Naive thymus-derived CD4-positive, alpha-beta T cell (primary cell): ENCODE measurements at regions of chr12 and their contacts with region 1.

Region 1: GRCh38 chr12:546921-547845 is 87.4 kb downstream of the B4GALNT3 start:
- DNase-seq: peak; percentile 41 to 84 (median 55)
- ATAC-seq: peak; percentile 88
- H3K4me3 ChIP-seq: no peak overlapping the region
- H3K4me3 Mint-ChIP-seq: peak overlapping the region in 5 of 10 donors; percentile 25 to 51 (median 38)
- H3K27ac ChIP-seq: no peak overlapping the region
- H3K27ac Mint-ChIP-seq: peak overlapping the region in 3 of 9 donors; percentile 54 to 74 (median 62)
- H3K4me1 ChIP-seq: peaks cover 0 to 19% of the 10 kb centered on the region in 2 donors
- H3K4me1 Mint-ChIP-seq: peaks cover 28 to 62% (median 37%) of the 10 kb centered on the region in 7 donors
- H3K27me3 ChIP-seq: peaks cover 0 to 2% of the 10 kb centered on the region in 2 donors
- H3K27me3 Mint-ChIP-seq: peaks cover 11 to 20% (median 18%) of the 10 kb centered on the region in 5 donors

Region 2: GRCh38 chr12:442235-442884 is 104.8 kb before region 1 on chr12:
- CTCF ChIA-PET with region 1: interaction called, 39 read pairs
- POLR2A ChIA-PET with region 1: no interaction called
- intact Hi-C with region 1: loop called (anchors 1 to 2 kb)
- DNase-seq: peak in 7 of 9 donors; percentile 24 to 46 (median 38)
- ATAC-seq: peak; percentile 45
- H3K4me3 ChIP-seq: no peak overlapping the region
- H3K4me3 Mint-ChIP-seq: no peak overlapping the region
- H3K27ac ChIP-seq: no peak overlapping the region
- H3K27ac Mint-ChIP-seq: no peak overlapping the region
- H3K4me1 ChIP-seq: no peaks in the 10 kb centered on the region
- H3K4me1 Mint-ChIP-seq: no peaks in the 10 kb centered on the region
- H3K27me3 ChIP-seq: no peaks in the 10 kb centered on the region
- H3K27me3 Mint-ChIP-seq: peaks cover 0 to 4% (median 0%) of the 10 kb centered on the region in 5 donors

Region 3: GRCh38 chr12:452667-453210 is 94.4 kb before region 1 on chr12:
- CTCF ChIA-PET with region 1: interaction called, 36 read pairs
- POLR2A ChIA-PET with region 1: no interaction called
- intact Hi-C with region 1: loop called (anchors 1 kb)
- DNase-seq: peak in 5 of 9 donors; percentile 35 to 84 (median 48)
- ATAC-seq: no peak
- H3K4me3 ChIP-seq: no peak overlapping the region
- H3K4me3 Mint-ChIP-seq: no peak overlapping the region
- H3K27ac ChIP-seq: no peak overlapping the region
- H3K27ac Mint-ChIP-seq: peak overlapping the region in 2 of 9 donors; percentile 55 to 62
- H3K4me1 ChIP-seq: no peaks in the 10 kb centered on the region
- H3K4me1 Mint-ChIP-seq: peaks cover 0 to 8% (median 0%) of the 10 kb centered on the region in 7 donors
- H3K27me3 ChIP-seq: no peaks in the 10 kb centered on the region
- H3K27me3 Mint-ChIP-seq: peaks cover 0 to 35% (median 0%) of the 10 kb centered on the region in 5 donors

Region 4: DNA sequence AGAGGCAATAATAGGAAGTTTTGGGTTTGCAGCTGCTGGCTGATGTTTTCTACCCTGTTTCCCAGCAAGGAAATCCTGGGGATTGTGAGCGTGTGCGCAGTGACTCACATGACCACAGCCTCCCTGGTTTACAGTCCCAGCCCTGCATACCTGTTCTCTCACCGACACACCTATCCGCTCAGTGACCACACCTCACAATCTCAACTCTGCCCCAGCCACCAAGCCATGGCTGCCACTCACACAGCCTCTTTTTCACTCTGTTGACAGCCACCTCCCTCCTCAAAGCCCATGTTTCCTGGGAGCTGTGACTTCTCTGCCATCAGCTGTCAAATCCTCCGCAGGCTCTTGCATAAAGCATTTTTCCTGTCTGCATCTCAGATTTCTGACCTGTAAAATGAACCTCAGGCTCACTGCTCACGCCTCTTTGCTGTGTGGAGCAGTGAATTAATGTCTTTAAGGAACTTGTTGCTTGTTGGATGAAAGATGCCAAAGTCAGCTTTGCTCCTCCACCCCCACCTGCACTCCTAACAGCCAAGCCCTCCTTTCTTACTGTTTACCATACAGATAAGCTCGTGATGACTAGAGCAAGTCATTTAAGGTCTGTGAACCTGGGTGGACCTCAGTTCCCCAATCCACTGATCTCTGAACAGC is 43.9 kb before region 1 on chr12:
- CTCF ChIA-PET with region 1: no interaction called
- POLR2A ChIA-PET with region 1: no interaction called
- intact Hi-C with region 1: no loop called
- DNase-seq: no peak
- ATAC-seq: no peak
- H3K4me3 ChIP-seq: no peak overlapping the region
- H3K4me3 Mint-ChIP-seq: no peak overlapping the region
- H3K27ac ChIP-seq: no peak overlapping the region
- H3K27ac Mint-ChIP-seq: peak overlapping the region in 2 of 9 donors; percentile 38 to 48
- H3K4me1 ChIP-seq: no peaks in the 10 kb centered on the region
- H3K4me1 Mint-ChIP-seq: peaks cover 4 to 11% (median 6%) of the 10 kb centered on the region in 7 donors
- H3K27me3 ChIP-seq: no peaks in the 10 kb centered on the region
- H3K27me3 Mint-ChIP-seq: peaks cover 0 to 25% (median 0%) of the 10 kb centered on the region in 5 donors

Region 5: GRCh38 chr12:517538-517937 is 29.6 kb before region 1 on chr12:
- CTCF ChIA-PET with region 1: no interaction called
- POLR2A ChIA-PET with region 1: no interaction called
- intact Hi-C with region 1: no loop called
- DNase-seq: no peak
- ATAC-seq: no peak
- H3K4me3 ChIP-seq: no peak overlapping the region
- H3K4me3 Mint-ChIP-seq: no peak overlapping the region
- H3K27ac ChIP-seq: no peak overlapping the region
- H3K27ac Mint-ChIP-seq: no peak overlapping the region
- H3K4me1 ChIP-seq: no peaks in the 10 kb centered on the region
- H3K4me1 Mint-ChIP-seq: no peaks in the 10 kb centered on the region
- H3K27me3 ChIP-seq: peaks cover 0 to 3% of the 10 kb centered on the region in 2 donors
- H3K27me3 Mint-ChIP-seq: peaks cover 0 to 24% (median 11%) of the 10 kb centered on the region in 5 donors

Region 6: DNA sequence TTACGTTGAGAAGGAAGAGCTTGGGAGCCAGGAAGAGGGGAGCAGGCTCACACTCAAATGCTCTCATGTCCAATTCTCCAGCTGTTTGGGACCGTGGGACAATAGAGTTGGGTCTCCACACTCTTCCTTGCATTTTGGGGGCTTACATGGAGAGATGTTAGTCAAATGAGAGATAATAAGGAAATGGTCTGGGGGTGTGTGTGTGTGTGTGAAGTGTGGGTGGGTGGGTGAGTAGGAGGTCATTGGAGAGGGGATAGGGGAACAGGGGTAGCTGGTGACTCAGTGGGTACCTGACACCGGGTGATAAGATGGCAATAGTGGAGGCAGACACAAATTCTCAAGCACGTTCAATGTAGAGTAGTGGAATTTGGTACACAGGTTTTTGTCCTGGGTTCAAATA is 19.5 kb before region 1 on chr12:
- CTCF ChIA-PET with region 1: no interaction called
- POLR2A ChIA-PET with region 1: no interaction called
- intact Hi-C with region 1: no loop called
- DNase-seq: no peak
- ATAC-seq: no peak
- H3K4me3 ChIP-seq: no peak overlapping the region
- H3K4me3 Mint-ChIP-seq: no peak overlapping the region
- H3K27ac ChIP-seq: no peak overlapping the region
- H3K27ac Mint-ChIP-seq: no peak overlapping the region
- H3K4me1 ChIP-seq: no peaks in the 10 kb centered on the region
- H3K4me1 Mint-ChIP-seq: peaks cover 0 to 1% (median 0%) of the 10 kb centered on the region in 7 donors
- H3K27me3 ChIP-seq: no peaks in the 10 kb centered on the region
- H3K27me3 Mint-ChIP-seq: peaks cover 0 to 5% (median 3%) of the 10 kb centered on the region in 5 donors

Region 7: GRCh38 chr12:563250-563781 is 16.1 kb after region 1 on chr12:
- CTCF ChIA-PET with region 1: interaction called, 6 read pairs
- POLR2A ChIA-PET with region 1: interaction called, 3 read pairs
- intact Hi-C with region 1: loop called in 1 of 2 experiments (anchors 2 kb)
- DNase-seq: peak in 8 of 9 donors; percentile 54 to 89 (median 85)
- ATAC-seq: peak; percentile 91
- H3K4me3 ChIP-seq: peak overlapping the region; percentile 49
- H3K4me3 Mint-ChIP-seq: peak overlapping the region; percentile 73 to 98 (median 85)
- H3K27ac ChIP-seq: peak overlapping the region; percentile 80
- H3K27ac Mint-ChIP-seq: peak overlapping the region; percentile 84 to 96 (median 94)
- H3K4me1 ChIP-seq: peaks cover 49 to 71% of the 10 kb centered on the region in 2 donors
- H3K4me1 Mint-ChIP-seq: peaks cover 60 to 98% (median 92%) of the 10 kb centered on the region in 7 donors
- H3K27me3 ChIP-seq: no peaks in the 10 kb centered on the region
- H3K27me3 Mint-ChIP-seq: no peaks in the 10 kb centered on the region

Region 8: GRCh38 chr12:685388-685787 is 138.2 kb after region 1 on chr12:
- CTCF ChIA-PET with region 1: no interaction called
- POLR2A ChIA-PET with region 1: no interaction called
- intact Hi-C with region 1: no loop called
- DNase-seq: peak; percentile 48 to 96 (median 94)
- ATAC-seq: peak; percentile 96
- H3K4me3 ChIP-seq: no peak overlapping the region
- H3K4me3 Mint-ChIP-seq: peak overlapping the region; percentile 30 to 78 (median 72)
- H3K27ac ChIP-seq: peak overlapping the region; percentile 81
- H3K27ac Mint-ChIP-seq: peak overlapping the region; percentile 90 to 99 (median 98)
- H3K4me1 ChIP-seq: peaks cover 23 to 31% of the 10 kb centered on the region in 2 donors
- H3K4me1 Mint-ChIP-seq: peaks cover 23 to 53% (median 48%) of the 10 kb centered on the region in 7 donors
- H3K27me3 ChIP-seq: no peaks in the 10 kb centered on the region
- H3K27me3 Mint-ChIP-seq: no peaks in the 10 kb centered on the region